WTC11 (cell line): ENCODE measurements at regions of chr14 and their contacts with region 1.

Region 1: DNA sequence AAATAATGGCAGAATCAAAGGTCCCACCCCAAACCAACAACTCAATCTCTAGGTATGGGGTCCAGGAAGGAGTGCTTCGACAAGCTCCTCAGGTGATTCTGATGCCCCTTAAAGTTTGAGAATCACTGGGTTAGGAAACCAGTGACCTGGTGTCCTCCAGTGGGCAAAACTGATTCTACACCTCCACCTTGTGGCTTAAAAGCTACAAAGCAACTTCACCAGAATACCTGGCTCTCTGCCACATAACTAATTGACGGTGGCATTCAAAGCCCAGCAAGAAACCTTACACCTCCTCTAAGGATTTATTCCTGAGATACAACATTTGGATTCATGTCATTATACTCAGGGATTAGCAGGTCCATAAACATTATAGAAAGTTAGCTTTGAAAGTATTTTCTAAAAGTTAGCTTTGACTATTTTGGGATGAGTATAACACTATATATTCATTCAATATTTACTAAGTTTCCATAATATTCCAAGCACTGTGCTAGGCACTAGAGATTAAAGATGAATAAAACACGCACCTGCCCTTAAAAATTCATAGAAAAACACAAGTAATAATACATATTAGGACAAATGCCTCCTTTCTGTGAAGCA is 45.4 kb downstream of the DCAF5 start:
- DNase-seq: peak; percentile 18
- ATAC-seq: peak; percentile 98
- H3K4me3 Mint-ChIP-seq: no peak overlapping the region
- H3K27ac Mint-ChIP-seq: peak overlapping the region; percentile 50; the same call in 1 of the 2 replicates
- H3K4me1 Mint-ChIP-seq: peaks cover 4% of the 10 kb centered on the region
- H3K27me3 Mint-ChIP-seq: no peaks in the 10 kb centered on the region
- CTCF ChIP-seq: peak; percentile 57; the same call in 1 of the 2 replicates

Region 2: DNA sequence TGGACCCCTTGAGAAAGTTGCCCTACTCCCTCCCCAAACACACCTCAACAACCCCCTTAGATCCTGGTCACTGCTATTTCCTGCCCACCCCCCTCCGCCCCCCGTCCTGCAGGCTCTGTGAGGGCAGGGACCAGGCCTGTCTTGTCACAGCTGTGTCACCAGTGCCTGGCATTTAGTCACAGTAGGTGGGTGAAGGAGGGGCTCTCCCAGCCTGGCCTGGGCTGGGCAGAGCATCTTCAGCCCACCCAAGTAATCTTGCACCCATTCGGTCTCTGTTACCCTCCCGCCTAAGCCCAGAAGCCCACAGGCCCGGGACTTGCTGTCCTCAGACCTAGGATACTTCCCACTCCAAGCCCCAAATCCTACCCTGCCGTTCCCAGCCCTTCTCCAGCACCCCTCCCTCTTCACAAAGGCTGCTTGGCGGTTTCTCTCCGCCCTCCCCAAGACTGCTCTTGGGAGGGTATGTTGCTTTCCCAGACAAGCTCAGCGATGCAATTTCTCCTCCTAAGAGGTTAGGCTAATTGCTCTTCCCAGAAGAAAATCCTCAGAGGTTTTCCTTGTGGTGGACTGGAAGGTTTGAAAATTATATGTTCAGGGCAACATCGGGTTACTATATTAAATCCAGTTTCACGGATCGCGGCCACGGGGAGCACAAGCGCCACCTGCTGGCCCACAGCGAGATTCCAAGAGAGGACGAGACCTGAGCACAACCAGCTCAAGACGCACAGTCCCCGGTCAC is 263.9 kb before region 1 on chr14:
- CTCF ChIA-PET with region 1: interaction called, 11 read pairs
- POLR2A ChIA-PET with region 1: interaction called, 3 read pairs
- DNase-seq: peak; percentile 80
- ATAC-seq: peak; percentile 93
- H3K4me3 Mint-ChIP-seq: peak overlapping the region; percentile 82
- H3K27ac Mint-ChIP-seq: no peak overlapping the region
- H3K4me1 Mint-ChIP-seq: peaks cover 8% of the 10 kb centered on the region
- H3K27me3 Mint-ChIP-seq: no peaks in the 10 kb centered on the region; the same call in 1 of the 2 replicates
- CTCF ChIP-seq: peak; percentile 67

Region 3: GRCh38 chr14:68862954-68863594 is 244.4 kb before region 1 on chr14:
- CTCF ChIA-PET with region 1: interaction called, 43 read pairs
- POLR2A ChIA-PET with region 1: no interaction called
- DNase-seq: peak; percentile 85
- ATAC-seq: peak; percentile 90
- H3K4me3 Mint-ChIP-seq: no peak overlapping the region
- H3K27ac Mint-ChIP-seq: no peak overlapping the region
- H3K4me1 Mint-ChIP-seq: peaks cover 3% of the 10 kb centered on the region; the same call in 1 of the 2 replicates
- H3K27me3 Mint-ChIP-seq: no peaks in the 10 kb centered on the region; the same call in 1 of the 2 replicates
- CTCF ChIP-seq: peak; percentile 64

Region 4: DNA sequence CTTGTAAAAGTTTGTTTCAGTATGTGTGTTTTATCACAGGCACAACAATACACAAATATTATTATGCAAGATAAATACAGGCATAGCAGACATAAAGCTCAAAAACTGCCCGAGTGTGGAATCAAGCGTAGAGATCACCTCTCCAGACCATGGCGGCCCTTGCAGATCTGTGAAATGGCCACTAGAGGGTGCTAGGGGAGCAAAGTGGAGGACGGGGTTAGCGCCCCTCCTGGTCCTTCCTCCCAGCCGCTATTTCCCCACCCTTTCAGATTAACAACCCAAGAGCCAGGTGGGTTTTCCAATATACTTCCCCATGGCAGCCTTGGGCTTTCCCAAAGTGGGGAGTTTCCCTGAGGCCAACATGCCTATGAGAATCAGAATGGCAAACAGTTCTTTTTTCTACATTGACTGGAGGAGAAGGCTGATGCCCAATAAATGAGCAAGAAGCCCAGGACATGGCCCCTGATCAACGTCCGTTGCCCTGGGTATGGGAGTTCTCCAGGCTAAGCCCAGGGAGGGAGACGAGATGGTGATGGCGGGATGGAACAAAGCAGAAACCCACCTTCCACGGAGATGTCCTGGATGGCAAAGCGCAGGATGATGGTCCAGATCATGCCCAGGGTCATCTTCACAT is 195.8 kb before region 1 on chr14:
- CTCF ChIA-PET with region 1: interaction called, 30 read pairs
- POLR2A ChIA-PET with region 1: no interaction called
- DNase-seq: peak; percentile 89
- ATAC-seq: peak; percentile 94
- H3K4me3 Mint-ChIP-seq: no peak overlapping the region
- H3K27ac Mint-ChIP-seq: peak overlapping the region; percentile 60; the same call in 1 of the 2 replicates
- H3K4me1 Mint-ChIP-seq: no peaks in the 10 kb centered on the region; the same call in 1 of the 2 replicates
- H3K27me3 Mint-ChIP-seq: no peaks in the 10 kb centered on the region
- CTCF ChIP-seq: peak; percentile 99

Region 5: GRCh38 chr14:68939893-68940613 is 167.5 kb before region 1 on chr14:
- CTCF ChIA-PET with region 1: interaction called, 10 read pairs
- POLR2A ChIA-PET with region 1: no interaction called
- DNase-seq: peak; percentile 40
- ATAC-seq: peak; percentile 25
- H3K4me3 Mint-ChIP-seq: no peak overlapping the region
- H3K27ac Mint-ChIP-seq: no peak overlapping the region
- H3K4me1 Mint-ChIP-seq: peaks cover 85% of the 10 kb centered on the region
- H3K27me3 Mint-ChIP-seq: no peaks in the 10 kb centered on the region
- CTCF ChIP-seq: no peak

Region 6: GRCh38 chr14:69023035-69023434 is 84.5 kb before region 1 on chr14:
- CTCF ChIA-PET with region 1: no interaction called
- POLR2A ChIA-PET with region 1: no interaction called
- DNase-seq: no peak
- ATAC-seq: no peak
- H3K4me3 Mint-ChIP-seq: no peak overlapping the region
- H3K27ac Mint-ChIP-seq: no peak overlapping the region
- H3K4me1 Mint-ChIP-seq: peaks cover 9% of the 10 kb centered on the region
- H3K27me3 Mint-ChIP-seq: no peaks in the 10 kb centered on the region
- CTCF ChIP-seq: no peak

Region 7: GRCh38 chr14:69090187-69090789 is 17.2 kb before region 1 on chr14:
- CTCF ChIA-PET with region 1: interaction called, 20 read pairs
- POLR2A ChIA-PET with region 1: no interaction called
- DNase-seq: peak; percentile 27
- ATAC-seq: peak; percentile 78
- H3K4me3 Mint-ChIP-seq: no peak overlapping the region
- H3K27ac Mint-ChIP-seq: no peak overlapping the region
- H3K4me1 Mint-ChIP-seq: peaks cover 14% of the 10 kb centered on the region
- H3K27me3 Mint-ChIP-seq: no peaks in the 10 kb centered on the region
- CTCF ChIP-seq: no peak; the same call in 1 of the 2 replicates

Region 8: GRCh38 chr14:69129264-69129880 is 21.9 kb after region 1 on chr14:
- CTCF ChIA-PET with region 1: interaction called, 13 read pairs
- POLR2A ChIA-PET with region 1: no interaction called
- DNase-seq: peak; percentile 64
- ATAC-seq: peak; percentile 90
- H3K4me3 Mint-ChIP-seq: no peak overlapping the region; the same call in 1 of the 2 replicates
- H3K27ac Mint-ChIP-seq: peak overlapping the region; percentile 46
- H3K4me1 Mint-ChIP-seq: peaks cover 10% of the 10 kb centered on the region
- H3K27me3 Mint-ChIP-seq: no peaks in the 10 kb centered on the region
- CTCF ChIP-seq: peak; percentile 85

Region 9: DNA sequence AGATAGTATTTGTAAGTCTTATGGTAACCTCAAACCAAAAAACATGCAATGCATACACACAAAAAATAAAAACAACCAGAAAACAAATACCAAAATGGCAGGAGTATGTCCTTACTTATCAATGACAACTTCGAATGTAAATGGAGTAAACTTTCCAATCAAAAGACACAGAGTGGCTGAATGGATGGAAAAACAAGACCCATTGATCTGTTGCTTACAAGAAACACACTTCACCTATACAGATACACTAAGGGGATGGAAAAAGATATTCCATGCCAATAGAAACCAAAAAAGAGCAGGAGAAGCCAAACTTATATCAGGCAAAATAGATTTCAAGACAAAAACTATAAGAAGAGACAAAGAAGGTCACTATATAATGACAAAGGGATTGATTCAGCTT is 54.1 kb after region 1 on chr14:
- CTCF ChIA-PET with region 1: no interaction called
- POLR2A ChIA-PET with region 1: no interaction called
- DNase-seq: no peak
- ATAC-seq: no peak
- H3K4me3 Mint-ChIP-seq: no peak overlapping the region
- H3K27ac Mint-ChIP-seq: no peak overlapping the region
- H3K4me1 Mint-ChIP-seq: no peaks in the 10 kb centered on the region
- H3K27me3 Mint-ChIP-seq: peaks cover 32% of the 10 kb centered on the region
- CTCF ChIP-seq: no peak